CD4-positive, alpha-beta T cell (primary cell): ENCODE measurements at regions of chr14 and their contacts with region 1.

Region 1: DNA sequence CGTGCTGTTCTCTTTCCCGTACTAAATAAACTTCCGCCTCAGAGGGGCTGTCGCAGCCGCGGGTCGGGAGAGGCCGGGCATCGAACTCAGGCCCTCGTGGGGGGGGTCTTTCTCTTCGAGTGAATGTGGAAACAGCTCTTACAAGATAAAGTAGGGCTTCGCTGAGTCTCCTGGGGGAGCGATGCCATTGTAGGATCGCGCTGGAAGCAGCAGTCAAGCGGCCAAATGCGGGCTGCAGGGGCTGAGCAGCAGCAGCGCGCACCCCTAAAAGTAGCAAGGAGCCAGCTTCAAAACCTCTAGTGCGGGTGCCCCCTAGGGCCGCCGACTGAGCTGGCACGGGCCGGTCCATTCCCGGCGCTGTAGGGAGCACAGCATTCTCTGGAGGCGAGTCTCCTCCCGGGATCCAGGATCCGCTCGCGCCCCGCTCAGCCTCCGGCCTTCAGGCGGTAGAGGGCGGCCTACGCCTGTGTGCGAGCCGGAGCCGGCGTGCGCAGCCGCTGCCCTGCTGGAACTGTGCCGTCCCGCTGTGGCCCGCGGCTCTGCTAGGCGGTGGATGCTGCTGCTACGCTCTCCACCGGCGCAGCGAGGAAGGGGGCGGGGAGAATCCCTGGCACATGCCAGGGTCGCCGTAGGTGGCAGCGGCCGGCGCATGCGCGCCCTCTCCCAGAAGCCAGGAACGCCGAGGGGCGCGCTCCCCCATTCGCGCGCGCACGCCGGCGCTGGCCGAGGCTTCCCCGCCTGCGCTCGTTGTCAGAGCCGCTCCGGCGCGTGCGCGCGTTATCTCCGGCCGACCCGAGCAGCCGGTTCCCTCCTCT is at the start of gene FUT8:
- DNase-seq: peak; percentile 89 to 98 (median 96)
- ATAC-seq: peak; percentile 88
- H3K4me3 ChIP-seq: peak within 1 kb of the TSS; percentile 74
- H3K4me3 Mint-ChIP-seq: peak within 1 kb of the TSS; percentile 99
- H3K27ac ChIP-seq: peak within 1 kb of the TSS; percentile 51 to 75
- H3K27ac Mint-ChIP-seq: peak within 1 kb of the TSS; percentile 92
- H3K4me1 ChIP-seq: peaks cover 11% of the 10 kb centered on the region
- H3K4me1 Mint-ChIP-seq: peaks cover 51% of the 10 kb centered on the region
- H3K27me3 ChIP-seq: no peaks in the 10 kb centered on the region
- H3K27me3 Mint-ChIP-seq: no peaks in the 10 kb centered on the region
- CTCF ChIP-seq: peak; percentile 63
- total RNA-seq, gene FUT8: 31.3 to 39.1 TPM

Region 2: GRCh38 chr14:65102441-65103149 is 309.6 kb before region 1 on chr14 and contains the start of gene MAX:
- CTCF ChIA-PET with region 1: interaction called, 4 read pairs
- POLR2A ChIA-PET with region 1: interaction called, 15 read pairs
- intact Hi-C with region 1: loop called (anchors 5 kb)
- DNase-seq: peak; percentile 96 to 100 (median 98)
- ATAC-seq: peak; percentile 89
- H3K4me3 ChIP-seq: peak within 1 kb of the TSS; percentile 98
- H3K4me3 Mint-ChIP-seq: peak within 1 kb of the TSS; percentile 91
- H3K27ac ChIP-seq: peak within 1 kb of the TSS; percentile 98 to 100
- H3K27ac Mint-ChIP-seq: peak within 1 kb of the TSS; percentile 90
- H3K4me1 ChIP-seq: peaks cover 21% of the 10 kb centered on the region
- H3K4me1 Mint-ChIP-seq: peaks cover 44% of the 10 kb centered on the region
- H3K27me3 ChIP-seq: no peaks in the 10 kb centered on the region
- H3K27me3 Mint-ChIP-seq: peaks cover 4% of the 10 kb centered on the region
- CTCF ChIP-seq: no peak
- total RNA-seq, gene MAX: 159 to 171 TPM

Region 3: DNA sequence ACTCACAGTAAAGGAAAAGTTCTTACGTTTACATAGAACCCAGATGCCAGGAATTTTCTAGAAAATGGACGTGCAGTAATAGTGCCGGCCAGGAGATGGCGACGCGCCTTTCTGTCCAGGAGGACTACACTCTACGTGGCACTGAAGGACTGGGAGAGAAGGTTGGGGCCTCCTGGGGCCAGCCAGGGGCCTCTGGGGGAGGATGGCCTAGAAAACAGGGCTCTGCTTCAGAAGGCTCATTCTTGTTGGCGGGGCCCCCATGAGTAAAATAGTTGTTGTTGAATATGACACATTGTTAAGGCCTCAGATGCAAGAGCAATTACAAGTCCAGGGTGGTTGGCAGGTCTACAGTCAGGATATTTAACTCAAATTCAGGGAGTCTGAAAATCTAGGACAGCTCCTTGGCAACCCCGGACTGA is 189.8 kb before region 1 on chr14:
- CTCF ChIA-PET with region 1: interaction called, 3 read pairs
- POLR2A ChIA-PET with region 1: interaction called, 9 read pairs
- intact Hi-C with region 1: loop called (anchors 1 to 2 kb)
- DNase-seq: peak; percentile 22 to 75 (median 46)
- ATAC-seq: peak; percentile 79
- H3K4me3 ChIP-seq: no peak overlapping the region
- H3K4me3 Mint-ChIP-seq: no peak overlapping the region
- H3K27ac ChIP-seq: no peak overlapping the region
- H3K27ac Mint-ChIP-seq: peak overlapping the region; percentile 3
- H3K4me1 ChIP-seq: peaks cover 42% of the 10 kb centered on the region
- H3K4me1 Mint-ChIP-seq: peaks cover 33% of the 10 kb centered on the region
- H3K27me3 ChIP-seq: no peaks in the 10 kb centered on the region
- H3K27me3 Mint-ChIP-seq: no peaks in the 10 kb centered on the region
- CTCF ChIP-seq: peak; percentile 76

Region 4: GRCh38 chr14:65287264-65288131 is 124.7 kb before region 1 on chr14:
- CTCF ChIA-PET with region 1: interaction called, 11 read pairs
- POLR2A ChIA-PET with region 1: interaction called, 40 read pairs
- intact Hi-C with region 1: loop called (anchors 1 to 2 kb)
- DNase-seq: peak; percentile 21 to 83 (median 34)
- ATAC-seq: peak; percentile 86
- H3K4me3 ChIP-seq: peak overlapping the region; percentile 24
- H3K4me3 Mint-ChIP-seq: peak overlapping the region; percentile 85
- H3K27ac ChIP-seq: peak overlapping the region; percentile 72 to 73
- H3K27ac Mint-ChIP-seq: peak overlapping the region; percentile 95
- H3K4me1 ChIP-seq: peaks cover 68% of the 10 kb centered on the region
- H3K4me1 Mint-ChIP-seq: peaks cover 70% of the 10 kb centered on the region
- H3K27me3 ChIP-seq: no peaks in the 10 kb centered on the region
- H3K27me3 Mint-ChIP-seq: no peaks in the 10 kb centered on the region
- CTCF ChIP-seq: no peak

Region 5: GRCh38 chr14:65329481-65329880 is 82.8 kb before region 1 on chr14:
- CTCF ChIA-PET with region 1: no interaction called
- POLR2A ChIA-PET with region 1: no interaction called
- intact Hi-C with region 1: no loop called
- DNase-seq: no peak
- ATAC-seq: no peak
- H3K4me3 ChIP-seq: no peak overlapping the region
- H3K4me3 Mint-ChIP-seq: no peak overlapping the region
- H3K27ac ChIP-seq: no peak overlapping the region
- H3K27ac Mint-ChIP-seq: no peak overlapping the region
- H3K4me1 ChIP-seq: peaks cover 5% of the 10 kb centered on the region
- H3K4me1 Mint-ChIP-seq: peaks cover 16% of the 10 kb centered on the region
- H3K27me3 ChIP-seq: peaks cover 0 to 2% of the 10 kb centered on the region in 2 experiments
- H3K27me3 Mint-ChIP-seq: no peaks in the 10 kb centered on the region
- CTCF ChIP-seq: no peak

Region 6: GRCh38 chr14:65958664-65959562 is 546.7 kb after region 1 on chr14:
- CTCF ChIA-PET with region 1: interaction called, 5 read pairs
- POLR2A ChIA-PET with region 1: interaction called, 6 read pairs
- intact Hi-C with region 1: loop called (anchors 1 kb)
- DNase-seq: peak in 4 of 14 experiments; percentile 5 to 68 (median 60)
- ATAC-seq: peak; percentile 58
- H3K4me3 ChIP-seq: no peak overlapping the region
- H3K4me3 Mint-ChIP-seq: no peak overlapping the region
- H3K27ac ChIP-seq: no peak overlapping the region
- H3K27ac Mint-ChIP-seq: no peak overlapping the region
- H3K4me1 ChIP-seq: peaks cover 27% of the 10 kb centered on the region
- H3K4me1 Mint-ChIP-seq: peaks cover 26% of the 10 kb centered on the region
- H3K27me3 ChIP-seq: no peaks in the 10 kb centered on the region
- H3K27me3 Mint-ChIP-seq: no peaks in the 10 kb centered on the region
- CTCF ChIP-seq: peak; percentile 83

Region 7: GRCh38 chr14:66152747-66153146 is 740.5 kb after region 1 on chr14:
- CTCF ChIA-PET with region 1: no interaction called
- POLR2A ChIA-PET with region 1: no interaction called
- intact Hi-C with region 1: no loop called
- DNase-seq: no peak
- ATAC-seq: no peak
- H3K4me3 ChIP-seq: no peak overlapping the region
- H3K4me3 Mint-ChIP-seq: no peak overlapping the region
- H3K27ac ChIP-seq: no peak overlapping the region
- H3K27ac Mint-ChIP-seq: no peak overlapping the region
- H3K4me1 ChIP-seq: no peaks in the 10 kb centered on the region
- H3K4me1 Mint-ChIP-seq: no peaks in the 10 kb centered on the region
- H3K27me3 ChIP-seq: no peaks in the 10 kb centered on the region
- H3K27me3 Mint-ChIP-seq: no peaks in the 10 kb centered on the region
- CTCF ChIP-seq: no peak

Region 8: GRCh38 chr14:67240978-67241414 is 1828.8 kb after region 1 on chr14:
- CTCF ChIA-PET with region 1: no interaction called
- POLR2A ChIA-PET with region 1: no interaction called
- intact Hi-C with region 1: loop called in 1 of 2 experiments (anchors 5 kb)
- DNase-seq: peak; percentile 82 to 96 (median 90)
- ATAC-seq: peak; percentile 92
- H3K4me3 ChIP-seq: peak overlapping the region; percentile 77
- H3K4me3 Mint-ChIP-seq: peak overlapping the region; percentile 94
- H3K27ac ChIP-seq: peak overlapping the region in 1 of 2 donors; percentile 67
- H3K27ac Mint-ChIP-seq: peak overlapping the region; percentile 80
- H3K4me1 ChIP-seq: peaks cover 10% of the 10 kb centered on the region
- H3K4me1 Mint-ChIP-seq: peaks cover 24% of the 10 kb centered on the region
- H3K27me3 ChIP-seq: no peaks in the 10 kb centered on the region
- H3K27me3 Mint-ChIP-seq: no peaks in the 10 kb centered on the region
- CTCF ChIP-seq: no peak